ENCODE measurements at regions of chr2 and their contacts with region 1.

Region 1: DNA sequence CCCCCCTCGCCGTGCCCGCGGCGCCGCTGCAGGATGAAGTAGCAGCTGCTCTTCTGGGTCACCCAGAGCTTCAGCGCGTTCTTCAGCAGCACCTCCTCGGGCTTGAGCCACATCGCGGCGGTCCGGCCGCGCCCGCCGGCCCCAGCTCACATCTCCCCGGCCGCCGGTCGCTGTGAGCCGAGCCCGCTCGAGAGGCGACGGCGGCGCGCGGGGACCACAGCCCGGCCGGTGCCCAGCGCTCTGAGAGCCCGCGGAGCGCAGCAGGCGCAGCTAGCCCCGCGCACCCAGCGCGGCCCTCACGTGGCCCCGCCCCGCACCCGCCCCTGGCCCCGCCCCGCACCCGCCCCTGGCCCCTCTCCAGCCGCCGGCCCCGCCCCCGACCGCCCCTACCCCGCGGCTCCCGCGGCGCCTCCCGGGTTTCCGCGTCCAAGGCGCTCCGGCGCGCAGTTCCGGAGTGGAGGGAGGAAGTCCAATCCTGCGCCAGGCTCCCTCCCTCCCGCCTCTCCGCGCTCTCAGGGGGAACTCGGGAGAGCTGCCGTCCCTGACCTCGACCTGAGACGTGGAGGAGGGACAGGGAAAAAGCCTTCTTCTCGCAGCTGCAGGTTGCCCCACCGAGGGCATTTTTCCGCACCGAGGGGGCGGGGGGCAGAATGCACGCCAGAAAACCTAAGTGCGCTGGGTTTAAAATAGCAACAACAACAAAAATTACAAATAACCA is at the start of gene TBC1D8:
- DNase-seq: peak; percentile 79 to 90
- ATAC-seq: peak; percentile 58 to 60
- H3K4me3 ChIP-seq: peak within 1 kb of the TSS; percentile 67 to 99 (median 95)
- H3K27ac ChIP-seq: peak within 1 kb of the TSS; percentile 84 to 97 (median 94)
- H3K4me1 ChIP-seq: peaks cover 55 to 58% of the 10 kb centered on the region in 2 donors
- H3K27me3 ChIP-seq: no peaks in the 10 kb centered on the region
- CTCF ChIP-seq: peak in 1 of 5 experiments; percentile 6
- POLR2A ChIP-seq: peak; percentile 96 to 97
- total RNA-seq, gene TBC1D8: 103 to 298 (median 201) TPM

Region 2: GRCh38 chr2:100730346-100730745 is 421.0 kb before region 1 on chr2:
- in situ Hi-C with region 1: loop called in 2 of 4 experiments (anchors 10 to 25 kb)
- intact Hi-C with region 1: loop called (anchors 5 kb)
- DNase-seq: peak; percentile 14 to 48
- ATAC-seq: peak; percentile 57 to 66
- H3K4me3 ChIP-seq: no peak overlapping the region
- H3K27ac ChIP-seq: no peak overlapping the region
- H3K4me1 ChIP-seq: peaks cover 0 to 3% of the 10 kb centered on the region in 2 donors
- H3K27me3 ChIP-seq: no peaks in the 10 kb centered on the region
- CTCF ChIP-seq: peak; percentile 36 to 62 (median 55)
- POLR2A ChIP-seq: no peak

Region 3: DNA sequence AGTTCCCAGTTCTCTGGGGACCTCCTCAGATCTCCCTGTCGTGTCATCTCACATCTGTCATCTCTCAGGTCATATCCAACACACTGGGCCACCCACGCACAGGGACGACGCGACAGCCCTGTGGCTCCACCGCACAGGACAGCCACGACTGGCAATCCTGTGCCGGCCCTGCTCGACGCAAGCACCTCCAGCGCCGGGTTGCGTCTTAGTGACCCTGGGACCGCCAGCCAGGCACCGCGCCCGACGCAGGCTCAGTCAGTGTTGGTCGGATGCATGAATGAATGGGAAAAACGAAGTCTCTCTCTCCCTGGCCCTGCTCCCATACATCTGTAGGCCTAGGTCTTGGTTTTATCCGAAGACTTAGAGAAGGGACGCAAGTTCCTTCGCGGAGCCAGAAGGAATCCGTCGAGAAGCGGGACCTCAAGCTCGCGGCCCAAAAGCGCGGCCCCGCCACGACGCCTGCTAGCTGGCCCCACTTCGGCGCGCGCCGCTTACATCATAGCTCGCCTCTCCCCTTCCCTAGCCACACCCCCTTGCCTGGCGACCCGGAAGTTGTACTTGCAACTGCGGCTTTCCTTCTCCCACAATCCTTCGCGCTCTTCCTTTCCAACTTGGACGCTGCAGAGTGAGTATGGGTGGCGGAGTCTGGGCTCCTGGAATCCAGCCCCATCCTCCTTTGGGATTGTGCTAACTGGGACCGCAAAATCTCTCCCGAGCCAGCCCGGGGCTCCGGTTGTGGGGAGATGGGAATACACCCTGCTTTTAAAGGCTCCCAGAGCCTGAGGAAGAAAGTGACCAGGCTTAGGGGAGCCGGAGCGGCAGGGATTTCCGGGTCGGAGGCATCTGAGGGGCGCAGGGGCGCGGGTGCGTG is 149.4 kb before region 1 on chr2 and contains the start of gene RPL31:
- in situ Hi-C with region 1: loop called (anchors 5 to 10 kb)
- intact Hi-C with region 1: loop called (anchors 1 kb)
- DNase-seq: peak; percentile 95 to 96
- ATAC-seq: peak; percentile 90 to 94
- H3K4me3 ChIP-seq: peak within 1 kb of the TSS; percentile 64 to 97 (median 92)
- H3K27ac ChIP-seq: peak within 1 kb of the TSS; percentile 76 to 91 (median 86)
- H3K4me1 ChIP-seq: peaks cover 14 to 18% of the 10 kb centered on the region in 2 donors
- H3K27me3 ChIP-seq: no peaks in the 10 kb centered on the region
- CTCF ChIP-seq: no peak
- POLR2A ChIP-seq: peak; percentile 79 to 81
- total RNA-seq, gene RPL31: 572 to 825 (median 762) TPM

Region 4: GRCh38 chr2:101012706-101013181 is 138.6 kb before region 1 on chr2:
- in situ Hi-C with region 1: loop called (anchors 5 to 10 kb)
- intact Hi-C with region 1: loop called (anchors 2 kb)
- DNase-seq: no peak
- ATAC-seq: peak in 1 of 2 donors; percentile 28
- H3K4me3 ChIP-seq: no peak overlapping the region
- H3K27ac ChIP-seq: peak overlapping the region; percentile 26 to 50 (median 32)
- H3K4me1 ChIP-seq: peaks cover 9 to 21% of the 10 kb centered on the region in 2 donors
- H3K27me3 ChIP-seq: no peaks in the 10 kb centered on the region
- CTCF ChIP-seq: peak; percentile 78 to 88 (median 82)
- POLR2A ChIP-seq: no peak

Region 5: DNA sequence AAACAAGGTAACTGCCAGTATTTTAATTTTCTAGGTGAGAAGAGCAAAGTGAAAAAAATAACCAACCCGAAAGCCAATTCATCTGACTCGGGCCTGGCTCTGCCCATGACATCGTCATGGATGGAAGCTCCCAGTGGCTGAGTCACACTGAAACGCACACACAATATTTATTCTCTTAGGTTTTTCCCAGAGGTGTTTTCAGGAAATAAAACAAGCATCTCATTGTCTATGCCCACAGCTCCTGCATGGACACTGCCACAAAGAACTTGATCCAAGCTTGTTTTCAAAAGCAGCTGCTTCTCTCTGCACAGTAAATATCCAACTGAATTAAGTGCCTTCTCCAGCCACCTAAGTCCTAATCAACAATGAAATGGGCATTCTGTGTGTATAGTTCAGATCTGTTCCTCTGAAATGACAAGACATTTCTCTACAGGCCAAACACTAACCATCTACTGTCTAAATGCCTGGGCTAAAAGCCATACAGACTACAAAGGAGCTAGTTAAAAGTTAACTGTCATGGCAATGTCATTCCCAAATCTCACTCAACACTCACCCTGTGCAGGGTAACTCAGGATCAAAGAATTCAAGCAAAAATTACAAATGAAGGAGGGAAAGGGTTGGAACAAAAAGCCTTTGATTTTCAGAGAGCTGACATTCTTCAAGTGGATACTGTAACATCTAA is 86.3 kb before region 1 on chr2:
- in situ Hi-C with region 1: no loop called
- intact Hi-C with region 1: loop called (anchors 5 kb)
- DNase-seq: no peak
- ATAC-seq: no peak
- H3K4me3 ChIP-seq: no peak overlapping the region
- H3K27ac ChIP-seq: peak overlapping the region; percentile 78 to 88 (median 83)
- H3K4me1 ChIP-seq: peaks cover 51 to 56% of the 10 kb centered on the region in 2 donors
- H3K27me3 ChIP-seq: no peaks in the 10 kb centered on the region
- CTCF ChIP-seq: no peak
- POLR2A ChIP-seq: no peak

Region 6: DNA sequence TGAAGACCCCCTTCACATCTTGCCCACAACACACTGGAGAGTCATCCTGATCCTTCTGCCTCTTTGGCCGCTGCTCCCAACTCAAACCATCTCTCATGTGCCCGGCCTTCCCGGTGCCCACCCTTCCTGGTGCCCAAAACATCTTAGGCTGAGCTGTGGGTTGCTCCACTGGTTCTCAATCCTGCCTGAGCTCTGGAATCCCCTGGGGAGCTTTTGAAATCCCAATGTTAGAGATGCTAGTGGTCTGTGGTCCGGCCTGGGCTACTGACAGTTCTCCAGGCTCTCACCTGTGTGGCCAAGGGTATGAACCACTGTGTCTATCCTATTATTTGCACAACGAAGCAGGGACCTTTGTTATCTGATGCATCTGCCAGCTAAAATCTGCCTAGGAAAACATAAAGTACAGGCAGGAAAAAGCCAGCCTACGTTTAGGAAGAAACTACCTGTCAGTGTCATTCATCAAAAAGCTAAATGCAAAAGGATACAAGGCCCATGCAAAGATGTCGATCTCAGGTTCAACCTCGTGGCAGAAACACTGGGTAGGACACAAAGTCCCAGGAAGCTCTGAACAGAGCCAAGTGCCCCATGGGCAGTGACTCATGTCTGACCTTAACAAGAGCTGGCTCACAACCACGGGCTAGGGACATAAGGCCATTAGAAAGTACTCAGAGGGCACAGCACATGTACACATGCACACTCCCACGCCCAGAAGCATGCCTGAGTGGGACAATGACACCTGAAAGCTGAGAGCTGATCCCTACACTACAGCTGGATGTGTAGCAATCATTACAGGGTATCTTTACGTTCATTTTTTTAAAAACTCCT is 30.9 kb before region 1 on chr2:
- in situ Hi-C with region 1: no loop called
- intact Hi-C with region 1: loop called (anchors 2 kb)
- DNase-seq: peak; percentile 97 to 100
- ATAC-seq: peak; percentile 77 to 80
- H3K4me3 ChIP-seq: peak overlapping the region in 1 of 4 donors; percentile 24
- H3K27ac ChIP-seq: peak overlapping the region; percentile 90 to 100 (median 99)
- H3K4me1 ChIP-seq: peaks cover 87 to 92% of the 10 kb centered on the region in 2 donors
- H3K27me3 ChIP-seq: no peaks in the 10 kb centered on the region
- CTCF ChIP-seq: no peak
- POLR2A ChIP-seq: peak in 1 of 2 donors; percentile 59

Region 7: GRCh38 chr2:101893681-101894381 is 742.5 kb after region 1 on chr2:
- in situ Hi-C with region 1: no loop called
- intact Hi-C with region 1: no loop called
- DNase-seq: no peak
- ATAC-seq: no peak
- H3K4me3 ChIP-seq: no peak overlapping the region
- H3K27ac ChIP-seq: no peak overlapping the region
- H3K4me1 ChIP-seq: peaks cover 0 to under 1% of the 10 kb centered on the region in 2 donors
- H3K27me3 ChIP-seq: no peaks in the 10 kb centered on the region
- CTCF ChIP-seq: no peak
- POLR2A ChIP-seq: no peak